Esophagus muscularis mucosa (tissue), 4 donors: ENCODE measurements at regions of chr7 and their contacts with region 1.

Region 1: GRCh38 chr7:99109108-99110051 is 34.5 kb downstream of the SMURF1 start:
- DNase-seq: no peak
- H3K4me3 ChIP-seq: peak overlapping the region in 1 of 4 donors; percentile 15
- H3K27ac ChIP-seq: peak overlapping the region; percentile 37 to 44 (median 38)
- H3K4me1 ChIP-seq: peaks cover 28 to 75% (median 55%) of the 10 kb centered on the region in 4 donors
- H3K27me3 ChIP-seq: no peaks in the 10 kb centered on the region
- CTCF ChIP-seq: no peak
- EP300 ChIP-seq: no peak
- POLR2A ChIP-seq: no peak

Region 2: GRCh38 chr7:99733448-99733847 is 624.1 kb after region 1 on chr7:
- intact Hi-C with region 1: loop called (anchors 10 kb)
- DNase-seq: peak; percentile 64
- H3K4me3 ChIP-seq: no peak overlapping the region
- H3K27ac ChIP-seq: no peak overlapping the region
- H3K4me1 ChIP-seq: no peaks in the 10 kb centered on the region
- H3K27me3 ChIP-seq: no peaks in the 10 kb centered on the region
- CTCF ChIP-seq: no peak
- EP300 ChIP-seq: no peak
- POLR2A ChIP-seq: no peak